Left cardiac atrium (tissue), 4 donors: ENCODE measurements at regions of chr7 and their contacts with region 1.

Region 1: DNA sequence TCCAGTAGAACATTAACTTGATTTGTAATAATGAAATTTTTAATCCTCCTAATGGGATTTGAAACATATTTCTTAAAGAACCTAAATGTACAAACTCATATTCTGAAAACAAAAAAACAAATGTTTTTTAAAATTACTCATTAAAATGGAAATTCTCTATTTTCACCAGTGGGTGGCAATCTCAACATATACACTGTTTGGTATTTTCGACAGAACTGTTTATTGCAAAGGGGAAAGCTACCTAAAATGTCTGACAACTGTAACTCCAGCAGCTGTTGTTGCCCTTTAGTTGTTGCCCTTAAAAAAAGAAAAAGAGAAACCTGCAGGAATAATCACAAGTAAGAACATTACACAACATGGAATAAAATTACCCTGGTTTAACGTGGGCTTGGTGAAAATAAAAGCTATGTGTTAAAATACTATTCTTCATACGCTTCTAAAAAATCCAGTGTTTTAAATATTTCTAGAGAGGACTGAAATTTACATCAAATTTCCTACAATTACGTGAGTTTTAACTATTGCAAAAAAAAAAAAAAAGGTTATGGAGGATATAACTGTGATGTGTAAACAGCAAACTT is 54.5 kb downstream of the COL1A2 start:
- DNase-seq: no peak
- ATAC-seq: peak; percentile 46 to 56

Region 2: GRCh38 chr7:94154858-94155257 is 294.4 kb before region 1 on chr7:
- intact Hi-C with region 1: no loop called
- DNase-seq: no peak
- ATAC-seq: no peak

Region 3: DNA sequence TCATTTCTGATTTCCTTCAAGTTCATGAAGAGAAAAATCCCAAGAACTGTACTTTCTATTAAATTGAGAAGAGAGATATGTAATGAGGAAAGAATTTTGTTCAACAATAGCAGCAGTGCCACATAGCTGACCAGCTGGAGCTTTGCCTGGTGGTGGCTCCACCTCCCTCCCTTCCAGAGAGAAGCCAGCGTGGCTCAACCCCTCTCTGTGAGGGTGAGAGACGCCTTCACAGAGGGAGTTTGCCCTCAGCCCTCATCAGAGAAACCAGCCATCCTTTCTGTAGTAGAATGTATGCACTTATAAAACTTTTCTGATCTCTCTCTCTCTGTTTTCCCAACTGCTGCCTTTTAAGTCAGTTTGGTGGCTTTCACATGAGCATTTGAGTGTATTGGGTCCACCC is 75.0 kb before region 1 on chr7:
- intact Hi-C with region 1: no loop called
- DNase-seq: peak; percentile 76
- ATAC-seq: peak; percentile 90 to 93

Region 4: DNA sequence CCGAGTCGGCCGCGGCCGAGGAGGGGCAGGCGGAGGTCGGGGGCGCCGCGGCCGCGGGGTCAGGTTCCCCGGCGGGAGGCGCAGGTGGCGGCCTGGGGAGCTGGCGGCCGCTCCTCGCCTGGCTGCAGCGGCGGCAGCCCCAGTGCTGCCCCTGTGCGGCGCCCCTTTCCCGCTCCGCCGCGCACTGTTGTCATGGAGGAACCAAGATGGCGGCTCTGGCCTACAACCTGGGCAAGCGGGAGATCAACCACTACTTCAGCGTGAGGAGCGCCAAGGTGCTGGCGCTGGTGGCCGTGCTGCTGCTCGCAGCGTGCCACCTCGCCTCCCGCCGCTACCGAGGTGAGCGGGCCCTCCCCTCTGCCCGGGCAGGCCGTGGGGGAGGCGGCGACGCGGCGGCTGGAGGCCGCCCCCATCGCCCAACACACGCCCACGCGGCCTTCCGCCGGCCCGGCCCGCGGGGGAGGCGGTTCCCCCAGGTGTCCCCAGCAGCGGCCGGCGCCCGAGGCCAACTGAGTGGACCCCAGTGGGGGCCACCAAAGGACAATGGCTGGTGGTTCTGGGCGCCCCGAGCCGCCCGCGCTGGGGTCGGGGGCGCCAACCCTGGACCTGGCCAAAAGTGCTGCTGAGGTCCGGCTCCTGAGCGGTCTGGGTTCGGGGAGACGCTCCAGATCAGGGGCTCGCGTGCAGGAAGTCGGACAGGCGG is 60.8 kb after region 1 on chr7:
- intact Hi-C with region 1: loop called in 1 of 2 experiments (anchors 5 kb)
- DNase-seq: peak; percentile 71
- ATAC-seq: peak; percentile 88 to 90

Region 5: GRCh38 chr7:94605031-94605430 is 155.8 kb after region 1 on chr7:
- intact Hi-C with region 1: no loop called
- DNase-seq: no peak
- ATAC-seq: no peak

Region 6: DNA sequence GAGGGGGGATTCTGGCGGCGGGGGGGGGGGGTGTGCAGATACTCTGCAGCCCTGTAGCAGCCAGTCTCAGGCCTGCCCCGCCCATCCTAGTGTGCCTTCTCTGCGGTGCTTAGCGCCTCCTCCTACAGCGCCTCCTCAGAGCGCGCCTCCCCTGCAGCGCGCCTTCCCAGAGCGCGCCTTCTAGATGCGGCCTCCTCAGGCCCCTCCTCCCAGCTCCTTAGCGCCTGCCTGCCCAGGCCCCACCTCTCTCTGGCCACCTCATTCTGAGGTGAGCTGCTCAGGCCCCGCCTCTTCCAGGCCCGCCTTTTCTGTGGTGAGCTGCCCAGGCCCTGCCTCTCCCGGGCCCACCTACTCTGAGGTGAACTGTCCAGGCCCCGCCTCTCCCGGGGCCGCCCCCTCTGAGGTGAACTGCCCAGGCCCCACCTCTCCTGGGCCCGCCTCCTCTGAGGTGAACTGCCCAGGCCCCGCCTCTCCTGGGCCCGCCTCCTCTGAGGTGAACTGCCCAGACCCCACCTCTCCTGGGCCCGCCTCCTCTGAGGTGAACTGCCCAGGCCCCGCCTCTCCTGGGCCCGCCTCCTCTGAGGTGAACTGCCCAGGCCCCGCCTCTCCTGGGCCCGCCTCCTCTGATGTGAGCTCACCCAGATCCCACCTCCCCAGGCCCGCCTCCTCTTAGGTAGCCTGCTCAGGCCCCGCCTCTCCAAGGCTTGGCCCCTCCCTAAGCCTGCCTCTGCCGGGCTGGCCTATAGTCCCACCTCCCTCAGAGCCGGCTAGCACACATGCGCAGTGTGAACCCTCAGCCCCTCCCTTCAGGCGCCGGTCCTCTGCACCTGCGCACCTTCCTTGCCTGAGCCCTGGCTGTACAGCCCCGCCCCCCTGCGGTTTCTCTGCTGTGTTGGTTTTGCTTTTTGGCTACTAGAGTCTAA is 208.8 kb after region 1 on chr7:
- intact Hi-C with region 1: loop called (anchors 10 kb)
- DNase-seq: peak; percentile 90
- ATAC-seq: peak; percentile 89 to 92

Region 7: GRCh38 chr7:95199779-95200558 is 750.7 kb after region 1 on chr7:
- intact Hi-C with region 1: loop called in 1 of 2 experiments (anchors 5 kb)
- DNase-seq: peak; percentile 22
- ATAC-seq: peak; percentile 83 to 89

Region 8: GRCh38 chr7:95246831-95247370 is 797.7 kb after region 1 on chr7:
- intact Hi-C with region 1: loop called (anchors 5 to 10 kb)
- DNase-seq: no peak
- ATAC-seq: peak; percentile 84 to 87

Region 9: GRCh38 chr7:95476904-95477594 is 1027.8 kb after region 1 on chr7:
- intact Hi-C with region 1: loop called in 1 of 2 experiments (anchors 10 kb)
- DNase-seq: peak; percentile 72
- ATAC-seq: peak; percentile 79 to 82